Activated naive CD4-positive, alpha-beta T cell treated with anti-CD3 and anti-CD28 coated beads for 36 hours (primary cell): ENCODE measurements at regions of chr12 and their contacts with region 1.

Region 1: DNA sequence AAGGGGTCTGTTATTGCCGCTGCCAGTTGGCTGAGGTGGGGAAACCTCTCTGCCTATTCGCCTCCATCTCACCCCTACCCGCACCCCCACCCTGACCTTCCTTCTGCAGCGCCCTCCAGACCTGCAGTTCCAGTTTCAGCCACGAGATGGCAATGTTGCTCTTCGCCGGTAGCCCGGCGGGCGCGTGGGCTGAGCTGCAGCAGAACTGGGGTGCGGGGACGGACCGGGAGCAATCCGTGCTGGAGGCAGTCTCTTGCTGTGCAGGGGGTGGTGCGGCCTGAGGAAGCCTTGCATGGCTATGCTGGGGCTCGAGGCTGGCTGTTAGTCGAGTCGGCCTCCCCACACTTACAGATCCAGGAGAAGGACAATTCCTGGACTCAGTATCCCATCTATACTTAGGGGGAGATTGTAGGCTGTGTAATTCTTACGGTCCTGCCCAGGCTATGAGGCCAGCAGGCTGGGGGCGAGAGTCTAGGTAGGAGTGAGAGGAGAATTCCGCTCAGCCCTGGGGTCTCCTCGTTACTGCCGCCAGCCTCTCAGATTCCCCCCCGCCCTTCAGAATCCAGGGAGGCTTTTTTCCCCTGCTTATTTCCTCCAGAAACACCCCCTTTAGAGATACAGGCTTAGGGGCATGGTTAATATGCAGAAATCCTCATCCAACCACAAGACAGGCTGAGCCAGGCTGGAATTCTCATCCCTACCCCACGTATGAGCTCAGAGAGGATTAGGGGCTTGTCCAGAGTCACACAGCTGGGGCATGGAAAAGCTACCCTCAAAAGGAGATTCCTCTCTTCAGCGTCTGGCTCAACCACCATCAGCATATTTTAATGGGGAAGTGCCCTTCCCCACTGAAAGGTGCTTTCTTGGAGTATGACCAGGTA is 118.2 kb downstream of the AACS start:
- DNase-seq: peak; percentile 83
- H3K4me3 Mint-ChIP-seq: no peak overlapping the region
- H3K27ac Mint-ChIP-seq: no peak overlapping the region
- H3K4me1 Mint-ChIP-seq: peaks cover 6% of the 10 kb centered on the region
- H3K27me3 Mint-ChIP-seq: peaks cover 46% of the 10 kb centered on the region

Region 2: GRCh38 chr12:124441443-124442194 is 741.8 kb before region 1 on chr12:
- CTCF ChIA-PET with region 1: no interaction called
- intact Hi-C with region 1: no loop called
- DNase-seq: no peak
- H3K4me3 Mint-ChIP-seq: no peak overlapping the region
- H3K27ac Mint-ChIP-seq: no peak overlapping the region
- H3K4me1 Mint-ChIP-seq: peaks cover 2% of the 10 kb centered on the region
- H3K27me3 Mint-ChIP-seq: no peaks in the 10 kb centered on the region

Region 3: DNA sequence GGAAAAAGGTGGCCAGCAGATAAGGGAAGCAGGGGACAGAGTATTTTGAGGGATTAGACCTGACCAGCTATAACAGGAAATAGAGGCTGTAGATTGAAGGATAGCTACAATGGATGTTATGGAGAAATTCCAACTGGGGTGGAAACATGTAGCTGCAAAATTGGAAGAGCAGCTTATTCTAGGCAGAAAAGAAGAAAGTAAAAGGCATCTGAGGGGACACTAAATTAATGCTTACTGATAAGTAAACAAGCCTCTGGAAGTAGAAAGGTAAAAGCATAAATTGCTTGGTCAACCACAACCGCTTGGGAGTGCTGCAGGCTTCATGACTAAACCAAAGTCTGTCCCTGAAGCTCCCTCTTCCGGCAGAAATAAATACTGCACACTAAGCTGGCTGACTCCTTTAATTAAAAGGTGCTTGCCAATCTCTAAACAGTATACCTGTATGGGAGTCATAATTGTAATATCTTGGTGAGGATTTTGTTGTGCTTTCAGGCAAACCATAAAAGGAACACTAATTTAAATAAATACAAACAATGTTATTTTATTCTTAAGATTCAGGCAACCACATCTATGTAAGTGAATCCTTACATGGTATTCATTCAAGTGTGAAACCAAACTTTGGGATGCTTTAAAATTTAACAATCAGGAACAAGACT is 276.7 kb before region 1 on chr12:
- CTCF ChIA-PET with region 1: no interaction called
- intact Hi-C with region 1: loop called (anchors 2 kb)
- DNase-seq: peak; percentile 98
- H3K4me3 Mint-ChIP-seq: no peak overlapping the region
- H3K27ac Mint-ChIP-seq: peak overlapping the region; percentile 12
- H3K4me1 Mint-ChIP-seq: peaks cover 19% of the 10 kb centered on the region
- H3K27me3 Mint-ChIP-seq: no peaks in the 10 kb centered on the region

Region 4: GRCh38 chr12:125315771-125316170 is 132.3 kb after region 1 on chr12:
- CTCF ChIA-PET with region 1: no interaction called
- intact Hi-C with region 1: no loop called
- DNase-seq: no peak
- H3K4me3 Mint-ChIP-seq: no peak overlapping the region
- H3K27ac Mint-ChIP-seq: no peak overlapping the region
- H3K4me1 Mint-ChIP-seq: no peaks in the 10 kb centered on the region
- H3K27me3 Mint-ChIP-seq: peaks cover 8% of the 10 kb centered on the region

Region 5: GRCh38 chr12:125330645-125331341 is 147.4 kb after region 1 on chr12:
- CTCF ChIA-PET with region 1: no interaction called
- intact Hi-C with region 1: loop called (anchors 2 kb)
- DNase-seq: peak; percentile 56
- H3K4me3 Mint-ChIP-seq: no peak overlapping the region
- H3K27ac Mint-ChIP-seq: no peak overlapping the region
- H3K4me1 Mint-ChIP-seq: no peaks in the 10 kb centered on the region
- H3K27me3 Mint-ChIP-seq: peaks cover 22% of the 10 kb centered on the region

Region 6: GRCh38 chr12:125402874-125403789 is 219.7 kb after region 1 on chr12:
- CTCF ChIA-PET with region 1: interaction called, 8 read pairs
- intact Hi-C with region 1: loop called (anchors 1 kb)
- DNase-seq: no peak
- H3K4me3 Mint-ChIP-seq: no peak overlapping the region
- H3K27ac Mint-ChIP-seq: no peak overlapping the region
- H3K4me1 Mint-ChIP-seq: no peaks in the 10 kb centered on the region
- H3K27me3 Mint-ChIP-seq: peaks cover 8% of the 10 kb centered on the region

Region 7: DNA sequence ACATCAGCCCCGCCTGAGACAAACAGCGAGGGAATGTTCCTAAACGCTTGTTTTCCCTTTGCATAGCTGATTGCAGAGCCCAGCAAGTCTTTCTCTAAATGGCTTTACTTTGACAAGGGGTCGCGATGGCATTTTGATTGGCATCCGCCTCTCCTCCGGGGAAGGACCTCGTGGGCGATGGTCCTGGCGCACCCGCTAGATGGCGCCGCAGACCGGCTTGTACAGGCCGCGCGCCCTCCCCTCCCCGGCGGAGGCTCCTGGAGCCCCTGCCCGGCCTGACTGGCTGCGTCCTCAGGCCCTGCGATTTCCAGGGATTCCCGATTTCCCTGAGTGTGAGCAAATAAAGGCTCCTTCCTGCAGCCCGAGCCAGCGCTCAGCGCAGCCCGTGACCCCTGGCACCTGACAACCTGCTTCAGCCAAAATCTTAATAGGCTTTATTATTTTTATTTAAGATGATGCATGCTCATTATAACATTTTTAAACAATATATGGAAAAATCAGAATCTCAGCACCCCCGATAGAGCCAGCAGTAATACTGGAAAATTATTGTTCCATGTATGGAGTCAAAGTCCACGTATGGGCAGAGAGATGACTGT is 350.1 kb after region 1 on chr12:
- CTCF ChIA-PET with region 1: no interaction called
- intact Hi-C with region 1: loop called (anchors 10 kb)
- DNase-seq: peak; percentile 38
- H3K4me3 Mint-ChIP-seq: no peak overlapping the region
- H3K27ac Mint-ChIP-seq: no peak overlapping the region
- H3K4me1 Mint-ChIP-seq: no peaks in the 10 kb centered on the region
- H3K27me3 Mint-ChIP-seq: peaks cover 6% of the 10 kb centered on the region

Region 8: DNA sequence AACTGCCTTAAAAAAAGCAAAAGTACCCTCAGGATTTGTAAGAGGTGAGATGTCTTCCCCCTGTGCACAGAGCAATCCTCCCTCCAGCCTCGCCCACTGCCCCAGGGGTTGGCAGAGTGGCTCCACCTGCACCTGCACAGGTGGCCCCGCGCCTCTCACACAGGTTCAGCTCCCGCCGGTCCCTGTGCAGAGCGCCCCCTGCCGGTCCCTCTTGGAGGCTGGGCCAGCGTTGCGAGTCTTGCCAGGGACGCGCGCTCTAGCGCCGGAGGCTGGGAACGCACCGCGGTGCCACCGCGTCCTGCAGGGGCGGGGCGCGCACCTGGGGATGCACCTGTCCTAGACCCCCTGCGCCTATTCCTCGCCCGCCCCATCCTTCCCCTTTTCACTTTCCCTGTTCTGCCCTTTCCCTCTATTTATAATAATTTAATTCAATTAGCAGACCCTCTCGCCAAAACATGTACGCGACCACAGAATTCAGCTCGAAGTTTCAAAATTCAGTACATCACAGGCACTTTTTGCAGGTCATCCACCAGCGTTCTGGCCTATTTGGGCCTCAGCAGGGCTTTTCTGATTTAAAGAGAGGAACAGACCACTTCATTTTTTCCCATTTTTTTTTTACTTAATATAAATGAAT is 500.4 kb after region 1 on chr12:
- CTCF ChIA-PET with region 1: no interaction called
- intact Hi-C with region 1: loop called (anchors 5 kb)
- DNase-seq: peak; percentile 64
- H3K4me3 Mint-ChIP-seq: no peak overlapping the region
- H3K27ac Mint-ChIP-seq: no peak overlapping the region
- H3K4me1 Mint-ChIP-seq: no peaks in the 10 kb centered on the region
- H3K27me3 Mint-ChIP-seq: peaks cover 8% of the 10 kb centered on the region

Region 9: GRCh38 chr12:126874427-126875026 is 1691.1 kb after region 1 on chr12:
- CTCF ChIA-PET with region 1: no interaction called
- intact Hi-C with region 1: loop called (anchors 10 kb)
- DNase-seq: peak; percentile 60
- H3K4me3 Mint-ChIP-seq: no peak overlapping the region
- H3K27ac Mint-ChIP-seq: no peak overlapping the region
- H3K4me1 Mint-ChIP-seq: no peaks in the 10 kb centered on the region
- H3K27me3 Mint-ChIP-seq: peaks cover 4% of the 10 kb centered on the region